GM12878 (cell line): ENCODE measurements at regions of chr17 and their contacts with region 1.

Region 1: DNA sequence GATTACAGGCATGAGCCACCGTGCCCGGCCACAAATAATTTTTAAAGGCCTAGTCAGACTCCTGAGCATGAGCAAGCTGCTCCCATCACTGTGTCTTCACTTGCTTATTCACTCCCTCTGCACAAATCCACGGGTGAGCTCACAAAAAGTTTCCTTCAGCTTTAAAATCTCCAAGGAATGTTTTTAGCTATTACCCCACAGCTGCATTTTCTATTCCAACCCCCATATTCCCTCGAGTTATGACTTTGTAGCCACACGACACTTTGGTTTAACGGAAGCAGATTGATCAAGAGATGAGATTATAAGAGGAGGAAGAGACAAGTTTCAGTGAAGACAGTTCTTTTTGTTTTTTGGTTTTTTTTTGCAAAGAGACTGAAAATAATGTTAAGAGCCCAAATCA is 49.1 kb upstream of the SLC25A19 start:
- DNase-seq: no peak
- ATAC-seq: peak; percentile 28
- H3K4me3 ChIP-seq: peak overlapping the region; percentile 40; the same call in 1 of the 2 replicates
- H3K27ac ChIP-seq: peak overlapping the region; percentile 36
- H3K4me1 ChIP-seq: peaks cover 44% of the 10 kb centered on the region
- H3K27me3 ChIP-seq: no peaks in the 10 kb centered on the region
- CTCF ChIP-seq: no peak
- EP300 ChIP-seq: no peak
- POLR2A ChIP-seq: no peak
- RAD21 ChIP-seq: no peak

Region 2: DNA sequence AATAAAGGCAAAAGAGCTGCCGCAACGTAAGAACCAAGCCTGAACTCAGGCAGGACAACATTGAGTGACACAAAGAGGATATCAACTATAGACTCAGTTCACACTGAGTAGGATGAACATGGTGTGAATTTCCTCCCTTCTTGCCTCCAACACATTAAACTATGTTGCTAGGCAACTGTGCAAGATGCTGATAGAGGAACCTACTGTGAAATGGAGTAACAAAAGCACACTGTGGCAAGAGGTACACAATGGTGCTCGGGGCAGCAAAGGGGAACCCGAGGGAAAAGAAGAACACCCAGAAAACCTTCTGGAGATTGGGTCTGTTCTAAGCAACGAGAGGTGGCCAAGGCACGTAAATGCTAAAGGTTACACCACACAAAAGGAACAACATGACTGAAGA is 33.0 kb after region 1 on chr17:
- CTCF ChIA-PET with region 1: interaction called, 4 read pairs
- POLR2A ChIA-PET with region 1: interaction called, 25 read pairs
- RAD21 ChIA-PET with region 1: interaction called, 3 read pairs
- SMC1A ChIA-PET with region 1: interaction called, 125 read pairs
- in situ Hi-C with region 1: no loop called
- intact Hi-C with region 1: no loop called
- DNase-seq: no peak
- ATAC-seq: peak; percentile 51
- H3K4me3 ChIP-seq: no peak overlapping the region
- H3K27ac ChIP-seq: peak overlapping the region; percentile 27; the same call in 1 of the 2 replicates
- H3K4me1 ChIP-seq: peaks cover 24% of the 10 kb centered on the region
- H3K27me3 ChIP-seq: no peaks in the 10 kb centered on the region
- CTCF ChIP-seq: no peak
- EP300 ChIP-seq: no peak
- POLR2A ChIP-seq: no peak
- RAD21 ChIP-seq: no peak

Region 3: DNA sequence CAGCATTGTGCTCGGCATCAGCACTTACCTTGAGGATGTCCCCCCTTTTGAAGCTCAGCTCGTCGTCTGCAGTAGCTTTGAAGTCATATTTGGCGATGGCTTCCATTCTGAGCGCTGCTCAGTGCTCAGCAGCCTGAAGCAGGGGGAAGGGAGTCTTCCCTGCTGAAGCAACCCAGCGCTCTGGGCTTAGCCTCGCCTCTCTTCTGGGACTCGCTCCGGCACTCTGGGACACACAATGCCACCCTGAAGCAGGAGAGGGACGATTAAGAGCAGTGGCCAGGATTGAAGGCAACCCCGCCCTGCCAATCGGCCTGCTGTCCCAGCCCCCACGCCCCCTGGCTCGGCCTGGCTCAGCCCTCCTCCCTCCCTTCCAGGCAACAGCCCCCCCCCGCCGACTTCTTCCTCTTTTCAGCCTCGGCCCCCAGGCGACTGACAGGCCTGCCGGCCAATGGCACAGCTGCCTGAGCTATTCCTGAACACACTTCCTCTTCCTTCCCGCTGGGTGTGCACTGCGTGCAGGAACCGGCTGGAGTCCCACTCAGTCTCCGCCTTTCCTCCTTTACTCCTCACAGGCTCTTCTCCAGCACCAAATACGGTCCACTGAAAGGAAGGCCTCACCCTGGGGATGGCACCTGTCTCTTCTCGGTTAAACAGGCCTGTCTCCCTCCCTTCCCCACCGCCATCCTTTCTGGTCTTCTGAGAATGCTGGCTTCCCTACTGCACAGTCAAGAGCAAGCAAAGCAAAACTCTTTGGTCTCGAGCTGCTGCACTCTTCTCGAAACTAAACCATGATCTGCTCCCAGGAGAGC is 55.4 kb after region 1 on chr17:
- CTCF ChIA-PET with region 1: interaction called, 10 read pairs
- POLR2A ChIA-PET with region 1: interaction called, 6 read pairs
- RAD21 ChIA-PET with region 1: interaction called, 8 read pairs
- SMC1A ChIA-PET with region 1: interaction called, 93 read pairs
- in situ Hi-C with region 1: no loop called
- intact Hi-C with region 1: no loop called
- DNase-seq: peak; percentile 79
- ATAC-seq: peak; percentile 95
- H3K4me3 ChIP-seq: peak overlapping the region; percentile 77
- H3K27ac ChIP-seq: peak overlapping the region; percentile 57
- H3K4me1 ChIP-seq: peaks cover 21% of the 10 kb centered on the region
- H3K27me3 ChIP-seq: no peaks in the 10 kb centered on the region
- CTCF ChIP-seq: 0 out of 6 replicates have a peak, but pooled peaks of 1 of the 3 experiments have one; percentile 3
- EP300 ChIP-seq: no peak
- POLR2A ChIP-seq: peak; percentile 51; the same call in 1 of the 2 replicates
- RAD21 ChIP-seq: no peak

Region 4: DNA sequence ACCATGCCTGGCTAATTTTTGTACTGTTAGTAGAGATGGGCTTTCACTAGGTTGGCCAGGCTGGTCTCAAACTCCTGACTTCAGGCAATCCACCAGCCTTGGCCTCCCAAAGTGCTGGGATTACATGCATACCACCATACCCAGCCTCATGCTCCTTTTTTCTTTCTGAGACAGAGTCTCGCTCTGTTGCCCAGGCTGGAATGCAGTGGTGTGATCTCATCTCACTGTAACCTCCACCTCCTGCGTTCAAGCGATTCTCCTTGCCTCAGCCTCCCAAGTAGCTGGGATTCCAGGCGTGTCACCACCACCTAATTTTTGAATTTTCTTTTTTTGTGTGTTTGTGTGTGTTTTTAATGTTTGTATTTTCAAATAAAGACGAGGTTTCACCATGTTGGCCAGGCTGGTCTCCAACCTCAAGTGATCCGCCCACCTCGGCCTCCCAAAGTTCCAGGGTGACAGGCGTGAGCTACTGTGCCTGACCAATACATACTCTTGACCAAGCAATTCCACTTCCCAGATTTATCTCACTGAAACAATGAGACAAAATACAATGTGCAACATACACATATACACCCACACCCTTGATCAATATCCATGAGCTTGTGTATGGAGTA is 62.1 kb after region 1 on chr17:
- CTCF ChIA-PET with region 1: interaction called, 10 read pairs
- POLR2A ChIA-PET with region 1: interaction called, 8 read pairs
- RAD21 ChIA-PET with region 1: interaction called, 23 read pairs
- SMC1A ChIA-PET with region 1: interaction called, 93 read pairs
- in situ Hi-C with region 1: no loop called
- intact Hi-C with region 1: no loop called
- DNase-seq: no peak
- ATAC-seq: no peak
- H3K4me3 ChIP-seq: peak overlapping the region; percentile 52
- H3K27ac ChIP-seq: no peak overlapping the region
- H3K4me1 ChIP-seq: peaks cover 24% of the 10 kb centered on the region; the same call in 1 of the 2 replicates
- H3K27me3 ChIP-seq: no peaks in the 10 kb centered on the region
- CTCF ChIP-seq: no peak
- EP300 ChIP-seq: no peak
- POLR2A ChIP-seq: no peak
- RAD21 ChIP-seq: no peak